ENCODE measurements at regions of chr11 and their contacts with region 1.

Region 1: GRCh38 chr11:113449743-113450142 is 25.5 kb downstream of the DRD2 start:
- DNase-seq: no peak
- H3K4me3 ChIP-seq: no peak overlapping the region
- CTCF ChIP-seq: no peak

Region 2: GRCh38 chr11:113345978-113346377 is 103.8 kb before region 1 on chr11:
- in situ Hi-C with region 1: loop called (anchors 5 kb)
- DNase-seq: no peak
- H3K4me3 ChIP-seq: no peak overlapping the region
- CTCF ChIP-seq: no peak

Region 3: DNA sequence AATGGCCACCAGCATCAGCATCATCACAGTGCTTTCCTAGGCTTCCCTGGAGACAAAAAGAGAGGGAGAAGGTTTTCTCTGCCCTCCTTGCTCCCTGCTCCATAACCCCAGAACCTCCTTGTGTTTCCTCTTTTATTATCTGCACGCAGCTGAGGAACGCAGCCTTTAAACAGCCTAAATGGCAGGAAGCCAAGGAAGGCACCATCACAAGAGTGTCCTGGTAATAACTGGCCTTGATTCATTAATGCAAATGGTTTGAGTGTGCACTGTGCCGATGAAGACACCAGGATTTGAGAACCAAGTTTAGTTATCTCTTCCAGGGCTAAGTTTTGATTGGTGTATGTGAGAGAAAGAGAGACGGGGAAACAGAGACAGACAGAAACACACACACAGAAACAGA is 54.8 kb after region 1 on chr11:
- in situ Hi-C with region 1: no loop called
- DNase-seq: no peak
- H3K4me3 ChIP-seq: no peak overlapping the region
- CTCF ChIP-seq: no peak

Region 4: DNA sequence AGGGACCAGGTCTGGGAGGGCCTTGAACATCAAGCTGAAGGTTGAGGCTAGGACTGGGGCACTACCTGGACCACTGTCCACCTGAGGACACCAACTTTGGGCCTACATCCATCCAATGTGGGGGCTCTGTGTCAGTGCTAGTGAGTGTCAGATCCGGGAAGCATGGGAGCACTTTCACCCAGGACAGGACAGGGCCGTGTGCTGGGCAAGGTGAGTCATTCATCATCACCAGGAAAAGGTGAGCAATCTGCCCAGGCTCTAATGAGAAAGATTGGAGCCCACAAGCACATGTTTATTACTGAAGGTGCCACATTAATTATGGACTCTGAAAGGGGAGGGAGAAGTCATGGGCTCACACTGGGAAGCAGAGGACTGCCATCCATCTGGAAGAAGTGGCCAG is 65.1 kb after region 1 on chr11:
- in situ Hi-C with region 1: loop called (anchors 5 kb)
- DNase-seq: no peak
- H3K4me3 ChIP-seq: no peak overlapping the region
- CTCF ChIP-seq: no peak

Measured in astrocyte of the cerebellum (primary cell).